Testis (tissue), 5 donors: ENCODE measurements at regions of chr3 and their contacts with region 1.

Region 1: GRCh38 chr3:129490242-129491045 is 38.0 kb upstream of the RHO start:
- DNase-seq: peak; percentile 92
- H3K4me3 ChIP-seq: no peak overlapping the region
- H3K27ac ChIP-seq: peak overlapping the region in 1 of 2 donors; percentile 62
- H3K4me1 ChIP-seq: peaks cover 20% of the 10 kb centered on the region
- H3K27me3 ChIP-seq: no peaks in the 10 kb centered on the region
- CTCF ChIP-seq: peak; percentile 72 to 88 (median 85)
- POLR2A ChIP-seq: no peak

Region 2: DNA sequence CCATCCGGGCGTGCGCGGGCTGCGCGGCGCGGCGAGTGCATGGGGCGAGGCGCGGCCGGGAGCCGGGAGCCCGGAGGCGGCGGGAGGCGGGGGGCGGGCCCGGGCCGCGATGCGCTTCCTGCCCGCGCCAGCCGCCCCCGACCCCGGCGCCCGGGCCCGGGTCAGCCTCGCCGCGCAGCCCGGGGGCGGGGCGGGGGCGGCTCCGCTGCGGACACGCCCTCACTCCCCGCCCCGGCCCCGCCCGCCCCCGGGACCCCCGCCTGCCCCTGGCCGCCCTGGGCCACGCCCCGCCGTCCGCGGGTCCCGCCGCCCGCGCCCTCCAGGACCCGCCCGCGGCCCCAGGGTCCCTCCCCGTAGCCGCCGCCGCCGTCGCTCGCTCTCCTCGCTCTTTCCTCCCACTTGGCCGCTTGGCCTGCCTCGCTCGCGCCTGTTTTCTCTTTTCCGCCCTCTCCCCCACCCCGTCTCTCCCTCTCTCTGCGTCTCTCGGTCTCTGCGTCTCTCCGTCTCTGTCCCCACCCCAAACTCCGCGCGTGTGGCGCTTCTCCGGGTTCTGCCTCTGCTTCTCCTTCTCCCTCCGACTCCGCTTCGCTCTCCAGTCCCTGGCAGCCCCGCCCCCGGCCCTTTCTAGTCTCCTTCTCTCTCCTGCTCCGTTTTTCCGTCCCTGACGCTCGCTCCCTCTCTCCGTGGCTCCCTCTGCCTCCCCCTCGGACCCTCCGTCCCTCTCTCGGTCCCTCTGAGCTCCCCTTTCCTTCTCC is 116.4 kb after region 1 on chr3 and contains the start of gene PLXND1:
- intact Hi-C with region 1: loop called (anchors 5 kb)
- DNase-seq: peak; percentile 74
- H3K4me3 ChIP-seq: peak within 1 kb of the TSS; percentile 68 to 72
- H3K27ac ChIP-seq: peak within 1 kb of the TSS; percentile 91 to 93
- H3K4me1 ChIP-seq: peaks cover 36% of the 10 kb centered on the region
- H3K27me3 ChIP-seq: no peaks in the 10 kb centered on the region
- CTCF ChIP-seq: no peak
- POLR2A ChIP-seq: no peak
- total RNA-seq, gene PLXND1: 50.2 to 87.8 TPM

Region 3: GRCh38 chr3:129824926-129825541 is 334.6 kb after region 1 on chr3:
- intact Hi-C with region 1: loop called (anchors 10 kb)
- DNase-seq: no peak
- H3K4me3 ChIP-seq: no peak overlapping the region
- H3K27ac ChIP-seq: no peak overlapping the region
- H3K4me1 ChIP-seq: peaks cover 4% of the 10 kb centered on the region
- H3K27me3 ChIP-seq: no peaks in the 10 kb centered on the region
- CTCF ChIP-seq: peak; percentile 60 to 69 (median 65)
- POLR2A ChIP-seq: no peak